ENCODE measurements at regions of chr17 and their contacts with region 1.

Region 1: DNA sequence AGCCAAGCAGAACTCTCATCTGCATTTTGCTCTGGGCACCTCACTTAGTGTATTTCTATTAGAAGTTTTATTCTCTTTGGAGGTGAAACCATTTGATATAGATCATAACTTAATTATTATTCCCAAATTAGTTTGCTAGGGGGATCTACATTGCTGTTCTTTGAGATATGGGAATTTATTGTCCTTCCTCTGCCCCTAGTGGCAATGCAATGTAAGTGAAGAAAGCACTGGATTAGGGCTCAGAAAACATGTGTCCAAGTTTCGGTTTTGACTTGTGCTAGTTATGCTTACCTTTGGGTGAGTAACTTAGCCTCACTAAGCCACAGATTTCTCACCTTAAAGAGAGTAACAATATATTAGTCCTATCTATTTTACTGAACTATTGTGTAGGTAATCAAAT is 2.9 kb downstream of the KRT39 start:
- DNase-seq: no peak
- H3K4me3 ChIP-seq: no peak overlapping the region
- H3K27ac ChIP-seq: no peak overlapping the region
- H3K27me3 ChIP-seq: no peaks in the 10 kb centered on the region
- CTCF ChIP-seq: peak; percentile 54

Region 2: GRCh38 chr17:39517224-39517623 is 1446.6 kb before region 1 on chr17:
- CTCF ChIA-PET with region 1: no interaction called
- POLR2A ChIA-PET with region 1: interaction called, 10 read pairs
- DNase-seq: no peak
- H3K4me3 ChIP-seq: no peak overlapping the region
- H3K27ac ChIP-seq: no peak overlapping the region
- H3K27me3 ChIP-seq: no peaks in the 10 kb centered on the region
- CTCF ChIP-seq: no peak

Region 3: DNA sequence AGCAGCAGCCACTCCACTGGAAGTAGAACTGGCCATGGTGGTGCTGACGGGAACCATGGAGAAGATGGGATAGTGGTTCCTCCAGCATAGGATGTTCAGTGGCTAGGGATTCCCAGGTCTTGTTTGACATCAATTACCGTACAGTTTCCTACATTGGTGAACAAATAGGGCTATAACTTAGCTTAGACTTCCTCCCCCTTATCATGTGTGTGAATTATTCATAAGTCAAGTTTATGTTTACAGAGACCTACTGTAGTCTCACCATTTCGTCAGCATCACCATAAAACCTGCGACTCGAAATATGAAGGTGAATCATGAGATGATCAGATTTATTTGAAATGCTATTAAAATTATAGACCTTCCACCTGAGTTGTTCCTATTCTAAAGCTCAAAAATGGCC is 94.9 kb after region 1 on chr17:
- CTCF ChIA-PET with region 1: no interaction called
- POLR2A ChIA-PET with region 1: interaction called, 11 read pairs
- DNase-seq: no peak
- H3K4me3 ChIP-seq: no peak overlapping the region
- H3K27ac ChIP-seq: peak overlapping the region; percentile 49
- H3K27me3 ChIP-seq: no peaks in the 10 kb centered on the region
- CTCF ChIP-seq: no peak

Measured in AG04450 (cell line).